ENCODE measurements at regions of chr11 and their contacts with region 1.

Region 1: GRCh38 chr11:124070915-124071635 is 29.9 kb upstream of the OR10G7 start:
- DNase-seq: peak; percentile 50
- H3K4me3 ChIP-seq: no peak overlapping the region
- H3K27ac ChIP-seq: no peak overlapping the region
- H3K4me1 ChIP-seq: peaks cover 11% of the 10 kb centered on the region
- H3K27me3 ChIP-seq: no peaks in the 10 kb centered on the region
- CTCF ChIP-seq: peak; percentile 68 to 71

Region 2: GRCh38 chr11:123741159-123742028 is 329.7 kb before region 1 on chr11 and contains the start of gene ZNF202:
- CTCF ChIA-PET with region 1: interaction called, 3 read pairs
- dilution Hi-C with region 1: no loop called
- in situ Hi-C with region 1: loop called in 1 of 2 experiments (anchors 25 kb)
- intact Hi-C with region 1: loop called (anchors 1 kb)
- DNase-seq: peak; percentile 84
- H3K4me3 ChIP-seq: peak within 1 kb of the TSS; percentile 84 to 98 (median 91)
- H3K27ac ChIP-seq: peak within 1 kb of the TSS; percentile 49
- H3K4me1 ChIP-seq: peaks cover 15% of the 10 kb centered on the region
- H3K27me3 ChIP-seq: no peaks in the 10 kb centered on the region
- CTCF ChIP-seq: peak in 1 of 2 donors; percentile 31
- total RNA-seq, gene ZNF202: 6.7 to 19.3 TPM

Region 3: GRCh38 chr11:123995119-123995518 is 76.0 kb before region 1 on chr11 and contains the start of gene OR10G6:
- CTCF ChIA-PET with region 1: no interaction called
- dilution Hi-C with region 1: no loop called
- in situ Hi-C with region 1: no loop called
- intact Hi-C with region 1: no loop called
- DNase-seq: no peak
- H3K4me3 ChIP-seq: no peak within 1 kb of the TSS
- H3K27ac ChIP-seq: no peak within 1 kb of the TSS
- H3K4me1 ChIP-seq: no peaks in the 10 kb centered on the region
- H3K27me3 ChIP-seq: no peaks in the 10 kb centered on the region
- CTCF ChIP-seq: no peak
- total RNA-seq, gene OR10G6: not detected

Region 4: GRCh38 chr11:124194698-124195410 is 123.8 kb after region 1 on chr11:
- CTCF ChIA-PET with region 1: no interaction called
- dilution Hi-C with region 1: no loop called
- in situ Hi-C with region 1: loop called (anchors 5 kb)
- intact Hi-C with region 1: loop called (anchors 1 kb)
- DNase-seq: peak; percentile 48
- H3K4me3 ChIP-seq: no peak overlapping the region
- H3K27ac ChIP-seq: no peak overlapping the region
- H3K4me1 ChIP-seq: no peaks in the 10 kb centered on the region
- H3K27me3 ChIP-seq: peaks cover 5% of the 10 kb centered on the region
- CTCF ChIP-seq: peak; percentile 89 to 94

Region 5: DNA sequence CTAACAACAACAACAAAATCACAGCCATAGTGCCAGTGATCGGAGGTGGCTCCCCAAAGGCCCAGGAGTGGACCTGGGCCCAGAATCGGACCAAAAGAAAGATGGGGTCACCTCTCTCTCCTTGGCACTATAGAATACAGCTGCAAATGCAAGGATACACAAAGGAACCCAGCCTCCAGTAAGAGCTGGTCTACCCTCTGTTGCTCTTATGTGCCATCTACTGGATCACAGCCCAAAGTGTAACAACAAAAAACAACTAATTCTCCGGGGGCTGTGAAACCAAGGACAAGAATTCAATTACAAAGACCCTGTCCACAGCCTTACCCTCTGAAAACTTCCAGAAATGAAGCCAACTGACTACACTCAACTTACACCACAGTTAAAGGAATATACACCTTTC is 206.7 kb after region 1 on chr11:
- CTCF ChIA-PET with region 1: no interaction called
- dilution Hi-C with region 1: no loop called
- in situ Hi-C with region 1: no loop called
- intact Hi-C with region 1: loop called (anchors 1 kb)
- DNase-seq: no peak
- H3K4me3 ChIP-seq: no peak overlapping the region
- H3K27ac ChIP-seq: no peak overlapping the region
- H3K4me1 ChIP-seq: no peaks in the 10 kb centered on the region
- H3K27me3 ChIP-seq: peaks cover 2% of the 10 kb centered on the region
- CTCF ChIP-seq: peak in 1 of 2 donors; percentile 36

Region 6: GRCh38 chr11:124329787-124330478 is 258.9 kb after region 1 on chr11:
- CTCF ChIA-PET with region 1: no interaction called
- dilution Hi-C with region 1: no loop called
- in situ Hi-C with region 1: no loop called
- intact Hi-C with region 1: loop called (anchors 1 kb)
- DNase-seq: no peak
- H3K4me3 ChIP-seq: no peak overlapping the region
- H3K27ac ChIP-seq: no peak overlapping the region
- H3K4me1 ChIP-seq: no peaks in the 10 kb centered on the region
- H3K27me3 ChIP-seq: peaks cover 5% of the 10 kb centered on the region
- CTCF ChIP-seq: peak in 1 of 2 donors; percentile 8